Activated naive CD4-positive, alpha-beta T cell treated with anti-CD3 and anti-CD28 coated beads for 36 hours (primary cell): ENCODE measurements at regions of chr5 and their contacts with region 1.

Region 1: GRCh38 chr5:133968049-133968980 is at the start of gene C5orf15:
- DNase-seq: peak; percentile 96
- H3K4me3 Mint-ChIP-seq: peak within 1 kb of the TSS; percentile 96
- H3K27ac Mint-ChIP-seq: peak within 1 kb of the TSS; percentile 93
- H3K4me1 Mint-ChIP-seq: peaks cover 46% of the 10 kb centered on the region
- H3K27me3 Mint-ChIP-seq: no peaks in the 10 kb centered on the region
- total RNA-seq, gene C5orf15: 18.1 to 18.6 TPM

Region 2: GRCh38 chr5:133930061-133930812 is 38.1 kb before region 1 on chr5:
- CTCF ChIA-PET with region 1: no interaction called
- intact Hi-C with region 1: loop called (anchors 1 kb)
- DNase-seq: peak; percentile 88
- H3K4me3 Mint-ChIP-seq: peak overlapping the region; percentile 80
- H3K27ac Mint-ChIP-seq: peak overlapping the region; percentile 97
- H3K4me1 Mint-ChIP-seq: peaks cover 45% of the 10 kb centered on the region
- H3K27me3 Mint-ChIP-seq: no peaks in the 10 kb centered on the region